Gastrocnemius medialis (tissue), 4 donors: ENCODE measurements at regions of chr14 and their contacts with region 1.

Region 1: DNA sequence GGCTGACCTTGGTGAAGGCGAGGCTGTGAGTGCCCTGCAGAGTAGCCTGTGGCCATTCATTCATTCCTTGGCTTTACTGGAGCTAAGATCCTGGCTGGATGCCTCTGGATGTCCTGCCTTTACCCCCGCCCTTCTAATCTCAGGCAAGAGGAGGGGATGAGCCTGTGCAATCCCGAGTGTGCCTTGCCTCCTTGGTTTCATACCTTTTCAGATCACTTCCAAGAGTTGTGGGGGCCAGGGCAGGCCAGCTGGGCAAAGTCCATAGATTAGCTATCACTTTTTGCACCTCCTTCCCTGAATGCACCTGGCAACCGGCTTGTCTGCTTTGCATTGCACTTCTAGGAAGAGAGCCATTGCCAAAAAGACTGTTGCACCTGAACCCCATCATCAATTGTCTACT is 1.5 kb downstream of the VRTN start:
- DNase-seq: no peak
- ATAC-seq: no peak
- H3K4me3 ChIP-seq: no peak overlapping the region
- H3K27ac ChIP-seq: no peak overlapping the region
- H3K4me1 ChIP-seq: no peaks in the 10 kb centered on the region
- H3K27me3 ChIP-seq: peaks cover 0 to 9% (median 8%) of the 10 kb centered on the region in 3 donors
- CTCF ChIP-seq: no peak
- POLR2A ChIP-seq: no peak

Region 2: GRCh38 chr14:74425525-74426201 is 75.9 kb after region 1 on chr14:
- in situ Hi-C with region 1: no loop called
- intact Hi-C with region 1: no loop called
- DNase-seq: no peak
- ATAC-seq: peak in 1 of 2 donors; percentile 62
- H3K4me3 ChIP-seq: no peak overlapping the region
- H3K27ac ChIP-seq: no peak overlapping the region
- H3K4me1 ChIP-seq: no peaks in the 10 kb centered on the region
- H3K27me3 ChIP-seq: peaks cover 13 to 18% (median 14%) of the 10 kb centered on the region in 3 donors
- CTCF ChIP-seq: no peak
- POLR2A ChIP-seq: no peak

Region 3: GRCh38 chr14:74784634-74785033 is 434.9 kb after region 1 on chr14:
- in situ Hi-C with region 1: no loop called
- intact Hi-C with region 1: loop called (anchors 5 kb)
- DNase-seq: no peak
- ATAC-seq: peak; percentile 69 to 95
- H3K4me3 ChIP-seq: no peak overlapping the region
- H3K27ac ChIP-seq: peak overlapping the region; percentile 12 to 50 (median 36)
- H3K4me1 ChIP-seq: peaks cover 3 to 19% of the 10 kb centered on the region in 2 donors
- H3K27me3 ChIP-seq: no peaks in the 10 kb centered on the region
- CTCF ChIP-seq: no peak
- POLR2A ChIP-seq: no peak